AG04450 (cell line): ENCODE measurements at regions of chr4 and their contacts with region 1.

Region 1: GRCh38 chr4:95510145-95510544 is 38.6 kb downstream of the UNC5C start:
- DNase-seq: no peak
- H3K4me3 ChIP-seq: no peak overlapping the region
- H3K27ac ChIP-seq: no peak overlapping the region
- H3K27me3 ChIP-seq: no peaks in the 10 kb centered on the region
- CTCF ChIP-seq: peak; percentile 72

Region 2: GRCh38 chr4:94913316-94913715 is 596.8 kb before region 1 on chr4:
- CTCF ChIA-PET with region 1: interaction called, 13 read pairs
- POLR2A ChIA-PET with region 1: no interaction called
- DNase-seq: no peak
- H3K4me3 ChIP-seq: no peak overlapping the region
- H3K27ac ChIP-seq: no peak overlapping the region
- H3K27me3 ChIP-seq: no peaks in the 10 kb centered on the region
- CTCF ChIP-seq: no peak

Region 3: DNA sequence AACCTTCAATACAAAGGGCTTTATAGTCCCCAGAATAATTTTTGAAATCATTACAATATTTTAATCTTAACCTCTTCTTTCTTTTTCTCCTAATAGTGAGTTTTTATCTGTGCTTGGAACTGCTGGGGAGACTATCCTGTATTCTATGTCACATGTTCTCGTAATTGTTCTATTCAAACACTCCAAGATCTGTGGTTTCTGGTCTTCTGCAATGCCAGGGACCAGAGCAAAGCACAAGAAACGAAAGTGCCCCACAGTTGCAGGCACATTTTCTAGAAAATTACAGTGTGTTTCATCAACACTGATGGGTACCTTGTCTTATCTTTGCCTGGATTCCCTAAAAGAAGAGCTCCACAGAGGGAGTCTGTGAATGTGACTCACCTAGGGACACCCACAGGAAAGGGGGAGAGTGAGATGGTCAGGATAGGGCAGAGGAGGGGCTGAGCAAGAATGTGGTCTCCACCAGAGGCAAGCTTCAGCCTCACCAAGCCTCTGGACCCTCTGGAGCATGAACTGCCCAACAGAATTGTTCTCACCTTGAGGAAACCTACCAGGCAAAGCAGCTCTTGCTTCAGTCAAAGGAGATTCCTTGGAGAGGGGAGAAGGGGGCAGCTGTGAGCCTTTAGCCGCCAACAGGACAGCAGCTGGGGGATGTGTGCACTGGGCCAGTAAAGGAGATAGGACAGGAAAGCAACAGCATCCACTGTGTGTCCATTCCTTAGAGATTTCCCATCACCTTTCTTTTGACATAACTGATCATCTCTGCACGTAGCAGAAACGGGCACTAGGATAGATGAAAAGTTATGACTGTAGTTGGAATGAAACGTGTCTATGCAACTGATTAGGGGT is 12.8 kb after region 1 on chr4:
- CTCF ChIA-PET with region 1: interaction called, 19 read pairs
- POLR2A ChIA-PET with region 1: no interaction called
- DNase-seq: no peak
- H3K4me3 ChIP-seq: no peak overlapping the region
- H3K27ac ChIP-seq: no peak overlapping the region
- H3K27me3 ChIP-seq: no peaks in the 10 kb centered on the region
- CTCF ChIP-seq: no peak